ENCODE measurements at regions of chr19 and their contacts with region 1.

Region 1: DNA sequence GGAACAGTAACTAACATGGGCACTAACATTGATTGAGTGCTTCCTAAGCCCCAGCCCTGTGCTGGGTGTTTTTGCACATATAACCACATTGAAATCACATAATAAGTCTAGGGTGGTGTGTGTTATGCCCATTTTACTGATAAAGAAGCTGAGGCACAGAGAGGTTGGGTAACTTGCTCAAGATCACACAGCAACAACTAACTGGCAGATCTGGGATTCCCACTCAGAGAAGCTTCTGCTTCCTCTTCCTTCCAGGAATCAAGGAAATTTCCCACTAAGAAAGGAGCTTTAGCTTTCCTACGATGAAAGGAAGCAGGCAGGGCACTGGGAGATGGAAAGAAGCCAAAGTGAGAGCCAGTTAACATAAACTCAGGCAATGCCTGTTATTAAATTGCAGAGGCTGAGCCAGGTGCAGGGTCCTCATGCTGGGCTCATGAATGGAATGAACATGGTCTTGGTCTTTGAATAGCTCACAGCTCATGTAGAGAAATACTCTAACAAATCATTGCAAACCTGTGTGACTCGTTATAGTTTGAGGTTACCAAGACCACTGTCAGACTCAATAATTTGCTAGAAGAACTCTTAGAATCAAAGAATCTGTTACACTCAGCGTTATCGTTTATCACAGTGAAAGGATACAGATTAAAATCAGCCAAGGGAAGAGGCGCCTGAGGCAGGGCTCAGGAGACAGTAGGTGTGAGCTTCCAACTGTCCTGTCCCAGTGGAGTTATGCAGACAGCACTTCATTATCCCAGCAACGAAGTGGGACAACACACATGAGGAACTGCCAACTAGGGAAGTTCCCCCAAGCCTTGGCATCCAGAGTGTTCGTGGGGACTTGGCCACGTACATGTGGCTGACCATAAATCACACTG is 10.2 kb downstream of the SSC5D start:
- DNase-seq: no peak
- ATAC-seq: no peak
- H3K4me3 ChIP-seq: no peak overlapping the region
- H3K4me3 Mint-ChIP-seq: no peak overlapping the region
- H3K27ac ChIP-seq: no peak overlapping the region
- H3K27ac Mint-ChIP-seq: no peak overlapping the region
- H3K4me1 ChIP-seq: peaks cover 4 to 6% of the 10 kb centered on the region in 2 donors
- H3K4me1 Mint-ChIP-seq: peaks cover 9% of the 10 kb centered on the region
- H3K27me3 ChIP-seq: peaks cover 0 to 4% (median 0%) of the 10 kb centered on the region in 4 experiments
- H3K27me3 Mint-ChIP-seq: no peaks in the 10 kb centered on the region
- CTCF ChIP-seq: no peak

Region 2: GRCh38 chr19:55467236-55468053 is 31.0 kb before region 1 on chr19:
- CTCF ChIA-PET with region 1: interaction called, 70 read pairs
- POLR2A ChIA-PET with region 1: interaction called, 5 read pairs
- intact Hi-C with region 1: no loop called
- DNase-seq: peak; percentile 79
- ATAC-seq: peak; percentile 99
- H3K4me3 ChIP-seq: no peak overlapping the region
- H3K4me3 Mint-ChIP-seq: no peak overlapping the region
- H3K27ac ChIP-seq: no peak overlapping the region
- H3K27ac Mint-ChIP-seq: no peak overlapping the region
- H3K4me1 ChIP-seq: peaks cover 4 to 7% of the 10 kb centered on the region in 2 donors
- H3K4me1 Mint-ChIP-seq: peaks cover 6% of the 10 kb centered on the region
- H3K27me3 ChIP-seq: no peaks in the 10 kb centered on the region
- H3K27me3 Mint-ChIP-seq: no peaks in the 10 kb centered on the region
- CTCF ChIP-seq: peak; percentile 99

Region 3: DNA sequence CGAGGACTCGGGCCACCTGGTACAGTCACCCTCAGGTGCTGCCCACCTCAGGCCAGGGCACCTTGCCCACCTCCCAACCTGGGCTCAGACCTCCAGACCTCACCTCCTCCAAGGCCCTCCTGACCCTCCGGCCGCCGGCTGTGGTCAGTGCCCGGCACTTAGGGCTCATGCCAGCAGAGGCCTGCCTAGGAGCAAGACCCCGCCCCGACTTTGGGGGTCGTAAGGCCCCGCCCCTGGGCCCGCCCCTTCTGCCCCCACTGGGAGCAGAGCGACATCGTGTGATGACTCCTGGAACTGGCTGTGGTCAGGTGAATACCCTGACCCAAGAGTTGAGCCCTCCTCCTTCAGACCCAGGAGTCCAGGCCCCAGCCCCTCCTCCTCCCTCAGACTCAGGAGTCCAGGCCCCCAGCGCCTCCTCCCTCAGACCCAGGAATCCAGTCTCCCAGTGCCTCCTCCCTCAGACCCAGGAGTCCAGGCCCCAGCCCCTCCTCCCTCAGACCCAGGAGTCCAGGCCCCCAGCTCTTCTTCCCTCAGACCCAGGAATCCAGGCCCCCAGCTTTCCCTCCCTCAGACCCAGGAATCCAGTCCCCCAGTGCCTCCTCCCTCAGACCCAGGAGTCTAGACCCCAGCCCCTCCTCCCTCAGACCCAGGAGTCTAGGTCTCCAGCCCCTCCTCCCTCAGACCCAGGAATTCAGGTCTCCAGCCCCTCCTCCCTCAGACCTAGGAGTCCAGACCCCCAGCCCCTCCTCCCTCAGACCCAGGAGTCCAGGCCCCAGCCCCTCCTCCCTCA is 38.7 kb after region 1 on chr19 and contains the start of gene SBK2:
- CTCF ChIA-PET with region 1: no interaction called
- POLR2A ChIA-PET with region 1: no interaction called
- intact Hi-C with region 1: no loop called
- DNase-seq: no peak
- ATAC-seq: no peak
- H3K4me3 ChIP-seq: no peak within 1 kb of the TSS
- H3K4me3 Mint-ChIP-seq: no peak within 1 kb of the TSS
- H3K27ac ChIP-seq: no peak within 1 kb of the TSS
- H3K27ac Mint-ChIP-seq: no peak within 1 kb of the TSS
- H3K4me1 ChIP-seq: no peaks in the 10 kb centered on the region
- H3K4me1 Mint-ChIP-seq: no peaks in the 10 kb centered on the region
- H3K27me3 ChIP-seq: no peaks in the 10 kb centered on the region
- H3K27me3 Mint-ChIP-seq: peaks cover 4% of the 10 kb centered on the region
- CTCF ChIP-seq: no peak
- total RNA-seq, gene SBK2: not detected in 2 replicates

Measured in B cell (primary cell).